Uterus (tissue), 4 donors: ENCODE measurements at regions of chr6 and their contacts with region 1.

Region 1: DNA sequence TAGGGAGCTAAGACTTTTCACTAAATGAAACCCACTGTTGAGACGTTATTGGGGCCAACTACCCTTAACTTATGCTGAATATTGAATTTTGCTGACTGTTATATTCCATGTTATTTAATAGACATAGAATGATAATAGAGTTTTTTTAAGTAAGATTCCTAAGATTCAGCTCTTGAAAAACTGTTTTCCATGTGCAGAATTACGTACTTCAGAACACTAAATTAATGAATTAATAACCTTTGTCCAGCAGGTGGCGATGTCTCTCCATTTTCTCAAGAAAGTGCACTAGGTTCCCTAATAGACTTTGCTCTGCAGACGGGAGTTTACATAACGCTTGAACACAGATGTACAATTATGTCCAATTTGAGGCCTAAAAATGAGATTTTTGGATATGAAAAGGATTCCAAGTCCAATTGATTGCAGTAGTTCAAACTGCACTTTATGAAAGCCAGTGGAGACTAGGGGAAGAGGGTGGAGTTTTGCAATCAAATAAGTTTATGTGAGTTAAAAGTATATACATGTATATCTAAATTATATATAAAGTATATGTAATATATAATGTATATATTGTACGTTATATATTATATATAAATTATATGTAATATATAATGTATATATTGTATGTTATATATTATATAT is 282.1 kb downstream of the UST start:
- DNase-seq: peak; percentile 44 to 82
- H3K4me3 ChIP-seq: no peak overlapping the region
- H3K27ac ChIP-seq: peak overlapping the region; percentile 24 to 55
- H3K4me1 ChIP-seq: peaks cover 0 to 10% of the 10 kb centered on the region in 2 donors
- H3K27me3 ChIP-seq: no peaks in the 10 kb centered on the region
- CTCF ChIP-seq: peak; percentile 72 to 88 (median 80)
- POLR2A ChIP-seq: no peak

Region 2: GRCh38 chr6:149513915-149514314 is 485.0 kb after region 1 on chr6:
- intact Hi-C with region 1: loop called (anchors 10 kb)
- DNase-seq: no peak
- H3K4me3 ChIP-seq: no peak overlapping the region
- H3K27ac ChIP-seq: no peak overlapping the region
- H3K4me1 ChIP-seq: no peaks in the 10 kb centered on the region
- H3K27me3 ChIP-seq: no peaks in the 10 kb centered on the region
- CTCF ChIP-seq: no peak
- POLR2A ChIP-seq: no peak